ENCODE measurements at regions of chr9 and their contacts with region 1.

Region 1: GRCh38 chr9:28443461-28443860 is 870.2 kb upstream of the C9orf72 start:
- DNase-seq: no peak
- H3K4me3 ChIP-seq: no peak overlapping the region
- H3K4me3 Mint-ChIP-seq: no peak overlapping the region
- H3K27ac ChIP-seq: no peak overlapping the region
- H3K27ac Mint-ChIP-seq: no peak overlapping the region
- H3K4me1 ChIP-seq: no peaks in the 10 kb centered on the region
- H3K4me1 Mint-ChIP-seq: no peaks in the 10 kb centered on the region
- H3K27me3 ChIP-seq: no peaks in the 10 kb centered on the region
- H3K27me3 Mint-ChIP-seq: peaks cover 0 to 2% (median 1%) of the 10 kb centered on the region in 3 donors
- CTCF ChIP-seq: no peak

Region 2: DNA sequence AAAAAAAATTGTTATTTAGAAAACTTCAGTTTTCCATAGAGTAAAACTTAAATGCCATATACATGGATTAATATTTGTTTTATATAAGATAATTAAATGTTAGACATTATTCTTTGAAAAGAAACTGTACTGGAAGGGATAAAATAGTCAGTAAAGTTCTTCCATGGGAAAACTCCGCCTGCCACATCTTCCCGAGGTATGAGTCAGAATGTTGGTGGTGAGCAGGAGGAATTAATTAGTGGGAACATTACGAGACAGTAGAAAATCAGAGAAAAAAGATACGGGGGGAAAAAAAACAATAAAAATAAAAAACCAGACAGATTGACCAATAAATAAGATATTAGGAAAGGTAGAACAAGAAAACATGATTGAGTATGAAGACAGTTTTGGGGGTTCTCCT is 60.1 kb after region 1 on chr9:
- intact Hi-C with region 1: loop called in 1 of 2 experiments (anchors 10 kb)
- DNase-seq: no peak
- H3K4me3 ChIP-seq: no peak overlapping the region
- H3K4me3 Mint-ChIP-seq: no peak overlapping the region
- H3K27ac ChIP-seq: no peak overlapping the region
- H3K27ac Mint-ChIP-seq: no peak overlapping the region
- H3K4me1 ChIP-seq: no peaks in the 10 kb centered on the region
- H3K4me1 Mint-ChIP-seq: no peaks in the 10 kb centered on the region
- H3K27me3 ChIP-seq: no peaks in the 10 kb centered on the region
- H3K27me3 Mint-ChIP-seq: no peaks in the 10 kb centered on the region
- CTCF ChIP-seq: no peak

Measured in CD14-positive monocyte (primary cell).